ENCODE measurements at regions of chr7 and their contacts with region 1.

Region 1: DNA sequence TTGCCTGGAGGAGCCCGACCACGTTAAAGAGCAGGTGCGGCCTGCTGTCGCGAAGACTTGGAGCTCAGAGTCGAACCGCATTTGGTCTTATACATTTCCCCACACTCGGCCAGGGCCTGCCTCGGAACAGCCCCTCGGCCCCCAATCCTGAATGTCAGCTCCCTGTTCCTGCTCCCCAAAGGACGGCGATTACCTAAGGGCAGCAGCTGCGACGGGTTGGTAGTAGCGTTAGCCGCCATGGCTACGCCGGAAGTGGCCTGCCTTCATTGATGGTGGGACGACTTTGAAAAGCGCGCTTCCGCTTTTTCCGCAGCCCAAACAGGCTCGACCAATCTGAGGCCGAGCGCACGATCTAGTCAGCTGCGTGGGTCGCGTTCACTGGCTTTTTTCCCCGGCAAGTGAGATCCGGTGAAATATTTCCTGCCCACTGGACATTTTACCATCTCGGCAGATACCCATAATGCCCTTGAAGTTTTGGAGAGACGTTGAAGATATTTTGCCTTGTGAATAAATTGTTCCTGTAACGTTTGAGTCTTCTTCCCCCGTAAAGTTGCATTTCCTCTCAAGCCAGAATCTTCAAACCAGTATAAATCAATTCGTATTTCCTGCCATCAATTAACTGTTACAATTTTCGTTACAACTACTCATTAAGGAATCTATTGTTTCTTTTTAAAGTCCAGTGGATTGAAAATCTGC is at the start of gene LSM5:
- DNase-seq: peak; percentile 90 to 92
- H3K4me3 ChIP-seq: peak within 1 kb of the TSS; percentile 93
- H3K4me3 Mint-ChIP-seq: peak within 1 kb of the TSS; percentile 89
- H3K27ac Mint-ChIP-seq: peak within 1 kb of the TSS; percentile 95
- H3K4me1 ChIP-seq: no peaks in the 10 kb centered on the region
- H3K4me1 Mint-ChIP-seq: peaks cover 6% of the 10 kb centered on the region
- H3K27me3 ChIP-seq: no peaks in the 10 kb centered on the region
- H3K27me3 Mint-ChIP-seq: no peaks in the 10 kb centered on the region
- CTCF ChIP-seq: no peak
- total RNA-seq, gene LSM5: 100.0 and 101 TPM in 2 replicates

Region 2: GRCh38 chr7:32390210-32390609 is 100.1 kb before region 1 on chr7:
- CTCF ChIA-PET with region 1: no interaction called
- POLR2A ChIA-PET with region 1: no interaction called
- intact Hi-C with region 1: no loop called
- DNase-seq: no peak
- H3K4me3 ChIP-seq: no peak overlapping the region
- H3K4me3 Mint-ChIP-seq: no peak overlapping the region
- H3K27ac Mint-ChIP-seq: no peak overlapping the region
- H3K4me1 ChIP-seq: no peaks in the 10 kb centered on the region
- H3K4me1 Mint-ChIP-seq: no peaks in the 10 kb centered on the region
- H3K27me3 ChIP-seq: no peaks in the 10 kb centered on the region; the same call in 1 of the 2 replicates
- H3K27me3 Mint-ChIP-seq: peaks cover 12% of the 10 kb centered on the region
- CTCF ChIP-seq: no peak

Region 3: DNA sequence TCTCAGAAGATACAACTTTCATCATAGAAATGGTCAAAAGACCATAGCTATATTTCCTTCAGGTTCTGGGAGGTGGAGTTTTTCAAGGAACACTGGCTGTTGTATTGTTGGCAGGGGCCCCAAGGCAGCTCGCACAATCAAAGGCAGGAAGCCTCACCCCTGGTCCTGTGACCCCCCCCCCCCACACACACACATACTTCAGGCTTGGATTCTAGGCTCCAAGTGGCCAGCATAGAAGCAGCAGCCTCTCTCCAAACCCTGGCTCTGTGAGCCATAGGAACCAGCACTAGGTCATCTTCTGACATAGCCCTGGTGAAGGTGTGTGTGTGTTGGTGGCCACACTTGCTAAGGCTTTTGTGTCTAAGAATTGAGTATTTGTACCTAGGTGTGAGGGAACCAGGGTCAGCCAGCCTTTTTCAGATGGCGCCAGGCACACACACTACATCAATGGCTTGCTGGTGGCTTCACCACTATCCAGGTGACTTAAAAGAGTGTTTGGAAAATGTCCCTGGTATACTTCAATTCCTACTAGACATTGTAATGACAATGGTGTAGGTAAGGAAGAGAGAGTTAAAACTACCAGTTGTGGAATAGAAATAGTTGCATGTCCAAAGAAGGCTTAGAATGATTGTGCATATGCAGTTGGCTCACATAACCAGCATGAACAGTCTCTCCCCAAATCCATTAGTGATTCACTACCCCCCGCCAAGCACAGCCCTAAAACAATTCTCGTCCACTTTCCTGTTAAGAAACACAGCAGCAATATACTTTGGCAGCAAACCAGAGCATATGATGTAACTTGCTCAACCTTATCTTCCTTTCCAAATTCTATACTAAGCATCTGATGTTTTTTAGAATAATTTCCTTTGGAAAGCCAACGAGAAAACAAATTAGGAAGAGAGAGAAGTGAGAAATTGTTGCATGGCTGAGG is 96.3 kb after region 1 on chr7:
- CTCF ChIA-PET with region 1: no interaction called
- POLR2A ChIA-PET with region 1: no interaction called
- intact Hi-C with region 1: loop called (anchors 2 kb)
- DNase-seq: no peak
- H3K4me3 ChIP-seq: no peak overlapping the region
- H3K4me3 Mint-ChIP-seq: peak overlapping the region; percentile 3
- H3K27ac Mint-ChIP-seq: peak overlapping the region; percentile 58
- H3K4me1 ChIP-seq: peaks cover 24% of the 10 kb centered on the region
- H3K4me1 Mint-ChIP-seq: peaks cover 16% of the 10 kb centered on the region
- H3K27me3 ChIP-seq: no peaks in the 10 kb centered on the region
- H3K27me3 Mint-ChIP-seq: no peaks in the 10 kb centered on the region
- CTCF ChIP-seq: no peak

Region 4: GRCh38 chr7:32639122-32639521 is 148.8 kb after region 1 on chr7:
- CTCF ChIA-PET with region 1: interaction called, 3 read pairs
- POLR2A ChIA-PET with region 1: no interaction called
- intact Hi-C with region 1: loop called (anchors 1 kb)
- DNase-seq: no peak
- H3K4me3 ChIP-seq: no peak overlapping the region
- H3K4me3 Mint-ChIP-seq: no peak overlapping the region
- H3K27ac Mint-ChIP-seq: no peak overlapping the region
- H3K4me1 ChIP-seq: no peaks in the 10 kb centered on the region
- H3K4me1 Mint-ChIP-seq: no peaks in the 10 kb centered on the region
- H3K27me3 ChIP-seq: no peaks in the 10 kb centered on the region
- H3K27me3 Mint-ChIP-seq: peaks cover 15% of the 10 kb centered on the region
- CTCF ChIP-seq: no peak